IMR-90 (cell line): ENCODE measurements at regions of chr10 and their contacts with region 1.

Region 1: GRCh38 chr10:77641788-77642397 is 4.3 kb upstream of the KCNMA1 start:
- DNase-seq: peak; percentile 83
- ATAC-seq: no peak
- H3K4me3 ChIP-seq: no peak overlapping the region
- H3K27ac ChIP-seq: no peak overlapping the region
- H3K4me1 ChIP-seq: no peaks in the 10 kb centered on the region; the same call in 1 of the 2 replicates
- H3K27me3 ChIP-seq: peaks cover 18% of the 10 kb centered on the region
- CTCF ChIP-seq: peak; percentile 88
- POLR2A ChIP-seq: no peak
- RAD21 ChIP-seq: peak; percentile 93

Region 2: DNA sequence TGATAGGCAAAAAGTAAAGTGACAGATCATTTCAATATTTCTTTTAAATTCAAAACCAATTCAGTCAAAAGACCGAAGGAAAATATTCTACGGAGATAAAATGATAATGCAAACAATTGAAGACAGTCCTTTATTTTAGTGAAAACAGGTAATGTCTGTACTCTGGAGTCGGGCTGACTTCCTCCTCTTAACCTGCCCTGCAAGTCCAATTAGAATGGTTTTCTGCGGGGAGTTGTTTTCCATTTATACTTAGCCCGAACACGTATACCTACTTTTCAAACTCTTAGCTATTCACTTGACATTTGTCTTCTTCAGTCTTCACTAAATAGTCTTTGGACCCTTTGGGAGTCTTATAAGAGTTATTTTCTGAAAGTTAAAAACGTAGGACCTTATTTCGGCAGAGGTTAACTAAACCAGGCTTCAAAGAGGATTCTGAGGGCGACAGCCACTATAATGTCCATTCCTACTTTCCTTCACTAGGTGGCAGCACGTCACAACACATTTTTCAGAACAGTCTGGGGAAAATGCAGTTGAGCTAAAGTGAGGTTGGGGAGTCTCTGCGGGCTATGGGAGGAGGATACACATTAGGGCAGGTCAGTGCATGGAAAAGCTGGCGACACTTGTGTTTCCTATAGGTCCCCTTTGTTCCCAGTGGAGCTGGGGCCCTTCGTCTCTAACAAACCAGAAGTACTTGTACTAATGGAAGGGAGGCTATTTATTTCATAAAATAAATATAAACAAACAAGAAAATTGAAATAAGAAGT is 476.3 kb before region 1 on chr10:
- CTCF ChIA-PET with region 1: interaction called, 4 read pairs
- POLR2A ChIA-PET with region 1: no interaction called
- dilution Hi-C with region 1: no loop called
- in situ Hi-C with region 1: loop called (anchors 5 kb)
- intact Hi-C with region 1: loop called (anchors 1 kb)
- DNase-seq: peak; percentile 71
- ATAC-seq: peak; percentile 55
- H3K4me3 ChIP-seq: no peak overlapping the region
- H3K27ac ChIP-seq: no peak overlapping the region
- H3K4me1 ChIP-seq: peaks cover 15% of the 10 kb centered on the region
- H3K27me3 ChIP-seq: no peaks in the 10 kb centered on the region
- CTCF ChIP-seq: peak; percentile 82
- POLR2A ChIP-seq: no peak
- RAD21 ChIP-seq: peak; percentile 86

Region 3: DNA sequence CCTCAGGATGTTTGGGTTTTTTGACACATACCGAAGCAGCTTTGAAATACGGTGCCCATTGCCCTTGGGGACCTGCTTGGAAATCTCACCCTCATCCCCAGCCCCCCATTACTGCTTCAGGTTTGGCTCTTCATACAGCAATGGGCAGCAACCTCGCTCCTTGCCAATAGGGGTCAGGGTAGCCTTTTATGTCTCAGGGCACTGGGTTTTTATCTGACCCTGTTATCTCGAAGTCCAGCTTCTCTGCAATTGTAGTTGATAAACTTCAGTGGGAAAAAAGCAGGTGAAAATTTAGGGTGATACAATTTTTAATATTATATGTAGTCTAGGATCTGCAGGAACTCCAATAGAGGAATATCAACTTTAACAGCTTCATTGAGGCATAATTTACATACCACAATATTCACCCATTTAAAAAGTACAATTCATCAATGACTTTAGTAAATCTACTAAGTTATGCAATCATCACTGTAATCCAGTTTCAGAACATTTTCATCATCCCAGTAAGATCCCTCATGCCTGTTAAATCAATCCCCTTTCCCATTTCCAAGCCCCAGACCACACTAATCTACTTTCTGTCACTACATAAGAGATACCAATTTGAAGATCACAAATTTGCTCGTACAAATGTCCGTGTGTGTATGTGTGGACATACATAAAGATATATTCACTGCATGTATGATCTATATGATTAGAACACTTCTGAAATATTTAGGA is 390.4 kb before region 1 on chr10:
- CTCF ChIA-PET with region 1: interaction called, 4 read pairs
- POLR2A ChIA-PET with region 1: no interaction called
- dilution Hi-C with region 1: no loop called
- in situ Hi-C with region 1: loop called (anchors 5 kb)
- intact Hi-C with region 1: loop called (anchors 1 kb)
- DNase-seq: peak; percentile 62
- ATAC-seq: peak; percentile 76
- H3K4me3 ChIP-seq: no peak overlapping the region
- H3K27ac ChIP-seq: no peak overlapping the region
- H3K4me1 ChIP-seq: peaks cover 10% of the 10 kb centered on the region
- H3K27me3 ChIP-seq: no peaks in the 10 kb centered on the region
- CTCF ChIP-seq: peak; percentile 78
- POLR2A ChIP-seq: no peak
- RAD21 ChIP-seq: peak; percentile 86

Region 4: DNA sequence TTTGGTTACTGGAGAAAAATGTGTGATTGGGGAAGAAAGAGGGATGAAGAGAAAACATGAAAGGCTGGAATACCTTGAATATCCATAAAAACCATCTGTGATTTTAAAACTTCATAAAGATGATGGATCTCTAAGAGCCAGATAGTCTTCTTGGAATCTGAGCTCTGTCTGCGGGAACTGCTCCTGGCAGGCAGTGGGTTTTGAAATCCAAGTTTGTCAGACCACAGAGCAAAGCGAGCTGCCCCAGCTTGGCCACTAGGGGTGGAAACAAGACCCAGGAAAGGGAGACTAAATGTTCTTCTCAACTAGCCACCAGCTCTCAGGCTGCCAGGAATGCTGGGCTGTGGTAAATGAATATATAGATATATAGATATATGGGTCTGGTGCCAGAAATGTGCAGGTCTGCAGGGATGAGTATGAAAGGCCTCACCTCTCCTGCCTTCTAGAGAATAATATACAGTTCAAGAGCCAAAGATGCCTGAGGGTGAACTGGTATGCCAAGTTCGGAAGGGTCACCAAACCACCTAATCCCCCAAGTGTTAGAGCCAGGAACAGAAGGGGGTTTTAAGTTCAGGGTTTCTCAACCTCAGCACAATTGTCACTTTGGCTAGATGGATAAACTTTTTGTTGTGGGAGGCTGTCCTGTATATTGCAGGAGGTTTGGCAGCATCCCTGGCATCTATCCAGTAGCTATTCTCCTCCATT is 213.1 kb before region 1 on chr10:
- CTCF ChIA-PET with region 1: interaction called, 3 read pairs
- POLR2A ChIA-PET with region 1: no interaction called
- dilution Hi-C with region 1: no loop called
- in situ Hi-C with region 1: no loop called
- intact Hi-C with region 1: loop called (anchors 2 kb)
- DNase-seq: peak; percentile 82
- ATAC-seq: peak; percentile 89
- H3K4me3 ChIP-seq: no peak overlapping the region
- H3K27ac ChIP-seq: no peak overlapping the region
- H3K4me1 ChIP-seq: 0 out of 2 replicates have a peak, but pooled peaks cover 2% of the 10 kb centered on the region
- H3K27me3 ChIP-seq: no peaks in the 10 kb centered on the region
- CTCF ChIP-seq: peak; percentile 83
- POLR2A ChIP-seq: no peak
- RAD21 ChIP-seq: peak; percentile 72

Region 5: GRCh38 chr10:77501152-77501845 is 140.6 kb before region 1 on chr10:
- CTCF ChIA-PET with region 1: no interaction called
- POLR2A ChIA-PET with region 1: no interaction called
- dilution Hi-C with region 1: no loop called
- in situ Hi-C with region 1: no loop called
- intact Hi-C with region 1: loop called (anchors 5 kb)
- DNase-seq: peak; percentile 93
- ATAC-seq: peak; percentile 72
- H3K4me3 ChIP-seq: no peak overlapping the region
- H3K27ac ChIP-seq: peak overlapping the region; percentile 57
- H3K4me1 ChIP-seq: peaks cover 37% of the 10 kb centered on the region
- H3K27me3 ChIP-seq: no peaks in the 10 kb centered on the region
- CTCF ChIP-seq: no peak
- POLR2A ChIP-seq: no peak
- RAD21 ChIP-seq: no peak

Region 6: GRCh38 chr10:77756319-77757232 is 114.7 kb after region 1 on chr10:
- CTCF ChIA-PET with region 1: no interaction called
- POLR2A ChIA-PET with region 1: no interaction called
- dilution Hi-C with region 1: no loop called
- in situ Hi-C with region 1: no loop called
- intact Hi-C with region 1: loop called (anchors 1 kb)
- DNase-seq: peak; percentile 74
- ATAC-seq: peak; percentile 97
- H3K4me3 ChIP-seq: no peak overlapping the region
- H3K27ac ChIP-seq: no peak overlapping the region
- H3K4me1 ChIP-seq: no peaks in the 10 kb centered on the region
- H3K27me3 ChIP-seq: no peaks in the 10 kb centered on the region
- CTCF ChIP-seq: peak; percentile 93
- POLR2A ChIP-seq: 0 out of 2 replicates have a peak, but pooled peaks have one; percentile 35
- RAD21 ChIP-seq: peak; percentile 93

Region 7: DNA sequence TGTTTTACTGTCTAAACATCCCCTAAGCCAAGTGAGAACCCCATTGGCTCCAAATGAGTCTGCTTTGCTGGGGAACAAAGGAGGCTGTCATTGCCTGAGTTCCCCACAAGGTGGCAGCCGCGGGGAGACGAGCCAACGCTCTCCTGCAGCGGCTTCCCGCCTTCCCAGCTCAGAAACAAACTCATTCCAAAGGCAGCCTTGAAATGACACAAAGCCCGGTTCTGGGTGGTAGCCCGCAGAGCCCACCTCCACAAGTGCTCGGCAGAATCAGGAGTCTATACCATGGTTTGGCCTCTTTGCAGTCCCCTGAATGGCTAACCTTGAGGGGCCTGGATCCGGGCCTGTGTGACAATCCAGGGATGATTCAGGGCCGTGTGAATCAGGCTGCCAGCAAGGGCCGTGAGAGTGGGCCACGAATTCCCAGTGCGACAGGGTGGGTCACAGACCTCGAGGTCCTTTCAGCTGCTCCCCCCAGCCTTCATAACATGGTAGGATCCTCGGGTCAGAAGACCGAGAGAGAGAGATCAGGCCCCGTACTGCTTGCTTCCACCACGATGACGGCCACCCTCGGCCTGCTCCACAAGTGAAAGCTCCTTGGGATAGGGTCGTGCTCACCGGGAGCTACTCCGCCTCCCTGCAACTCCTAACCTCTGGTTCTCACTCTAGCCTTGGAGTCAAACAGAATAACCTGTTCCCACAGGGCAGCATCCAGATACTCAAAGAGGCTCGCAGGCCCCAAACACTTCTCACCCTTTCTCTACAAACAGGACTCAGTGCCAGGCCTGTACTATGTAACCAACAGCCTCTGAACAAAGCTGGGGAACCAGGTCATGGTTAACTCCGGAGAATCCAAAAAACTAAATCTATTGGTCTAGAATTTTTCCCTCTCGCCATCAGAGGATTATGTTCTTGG is 205.1 kb after region 1 on chr10:
- CTCF ChIA-PET with region 1: no interaction called
- POLR2A ChIA-PET with region 1: no interaction called
- dilution Hi-C with region 1: no loop called
- in situ Hi-C with region 1: no loop called
- intact Hi-C with region 1: no loop called
- DNase-seq: peak; percentile 66
- ATAC-seq: peak; percentile 88
- H3K4me3 ChIP-seq: no peak overlapping the region
- H3K27ac ChIP-seq: no peak overlapping the region; the same call in 1 of the 2 replicates
- H3K4me1 ChIP-seq: peaks cover 20% of the 10 kb centered on the region
- H3K27me3 ChIP-seq: no peaks in the 10 kb centered on the region
- CTCF ChIP-seq: peak; percentile 89
- POLR2A ChIP-seq: no peak
- RAD21 ChIP-seq: peak; percentile 90